Natural killer cell (primary cell): ENCODE measurements at regions of chr4 and their contacts with region 1.

Region 1: GRCh38 chr4:6873792-6874461 is 35.7 kb upstream of the TBC1D14 start:
- DNase-seq: peak; percentile 78 to 87
- ATAC-seq: peak; percentile 76 to 95 (median 92)
- H3K4me3 ChIP-seq: no peak overlapping the region
- H3K4me3 Mint-ChIP-seq: no peak overlapping the region
- H3K27ac ChIP-seq: no peak overlapping the region
- H3K27ac Mint-ChIP-seq: peak overlapping the region in 1 of 2 donors; percentile 52
- H3K4me1 ChIP-seq: peaks cover 19% of the 10 kb centered on the region
- H3K4me1 Mint-ChIP-seq: peaks cover 14 to 20% of the 10 kb centered on the region in 2 donors
- H3K27me3 ChIP-seq: no peaks in the 10 kb centered on the region
- H3K27me3 Mint-ChIP-seq: no peaks in the 10 kb centered on the region
- CTCF ChIP-seq: peak; percentile 92

Region 2: GRCh38 chr4:6716018-6716911 is 157.7 kb before region 1 on chr4 and contains the start of gene BLOC1S4:
- intact Hi-C with region 1: loop called (anchors 1 kb)
- DNase-seq: peak; percentile 88 to 99
- ATAC-seq: peak; percentile 84 to 94 (median 86)
- H3K4me3 ChIP-seq: peak within 1 kb of the TSS; percentile 81
- H3K4me3 Mint-ChIP-seq: peak within 1 kb of the TSS; percentile 98
- H3K27ac ChIP-seq: peak within 1 kb of the TSS; percentile 83
- H3K27ac Mint-ChIP-seq: peak within 1 kb of the TSS; percentile 98
- H3K4me1 ChIP-seq: peaks cover 27% of the 10 kb centered on the region
- H3K4me1 Mint-ChIP-seq: peaks cover 29 to 32% of the 10 kb centered on the region in 2 donors
- H3K27me3 ChIP-seq: no peaks in the 10 kb centered on the region
- H3K27me3 Mint-ChIP-seq: no peaks in the 10 kb centered on the region
- CTCF ChIP-seq: no peak
- total RNA-seq, gene BLOC1S4: 18.9 to 20.1 (median 20.0) TPM